HEK293 (cell line): ENCODE measurements at regions of chr6 and their contacts with region 1.

Region 1: DNA sequence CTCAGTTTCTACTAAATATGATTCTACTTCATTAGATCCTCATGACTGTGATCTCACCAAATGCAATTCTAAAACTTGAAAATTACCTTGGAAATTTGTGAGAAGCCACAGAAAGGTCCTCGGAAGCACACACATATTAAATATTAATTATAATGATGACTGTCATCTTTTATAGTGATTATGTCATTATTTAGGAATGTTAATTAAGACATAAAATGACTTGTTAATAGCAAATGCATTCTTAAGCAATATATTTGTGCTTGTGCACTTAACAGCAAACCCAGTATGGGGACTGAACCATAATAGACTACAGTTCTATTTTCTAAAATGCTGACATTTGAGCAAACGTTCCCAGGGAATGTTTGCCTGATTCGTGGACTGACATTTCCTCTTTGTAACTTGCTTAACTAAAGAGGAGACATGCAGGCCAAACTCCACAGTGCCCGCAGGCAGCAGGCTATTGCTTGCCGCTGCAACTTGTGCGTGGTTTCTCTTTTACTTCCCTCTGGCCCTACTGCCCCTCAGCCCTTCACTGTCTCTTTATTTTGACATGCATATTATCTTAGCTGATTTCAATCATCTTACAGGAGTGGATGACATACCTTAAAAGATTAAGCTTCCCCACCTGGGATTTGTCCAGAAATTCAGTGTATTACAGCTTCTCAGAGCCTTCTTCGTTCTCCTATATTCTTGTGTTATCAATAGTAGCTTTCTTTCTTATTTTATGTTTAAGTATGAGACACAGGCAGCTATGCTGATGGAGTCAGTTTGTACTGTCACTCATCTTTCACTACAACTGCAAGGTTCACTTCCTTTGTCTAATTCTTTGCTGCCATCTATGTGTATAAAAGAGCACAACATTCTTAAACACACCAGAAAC is 141.5 kb downstream of the GMDS start:
- H3K4me3 ChIP-seq: no peak overlapping the region; the same call in 1 of the 2 replicates
- H3K27ac ChIP-seq: peak overlapping the region; percentile 80
- H3K4me1 ChIP-seq: peaks cover 40% of the 10 kb centered on the region
- CTCF ChIP-seq: peak; percentile 62; the same call in 1 of the 2 replicates

Region 2: GRCh38 chr6:1601158-1602048 is 502.5 kb before region 1 on chr6:
- CTCF ChIA-PET with region 1: interaction called, 43 read pairs
- POLR2A ChIA-PET with region 1: no interaction called
- H3K4me3 ChIP-seq: no peak overlapping the region
- H3K27ac ChIP-seq: peak overlapping the region; percentile 50; the same call in 1 of the 2 replicates
- H3K4me1 ChIP-seq: peaks cover 38% of the 10 kb centered on the region
- CTCF ChIP-seq: no peak

Region 3: DNA sequence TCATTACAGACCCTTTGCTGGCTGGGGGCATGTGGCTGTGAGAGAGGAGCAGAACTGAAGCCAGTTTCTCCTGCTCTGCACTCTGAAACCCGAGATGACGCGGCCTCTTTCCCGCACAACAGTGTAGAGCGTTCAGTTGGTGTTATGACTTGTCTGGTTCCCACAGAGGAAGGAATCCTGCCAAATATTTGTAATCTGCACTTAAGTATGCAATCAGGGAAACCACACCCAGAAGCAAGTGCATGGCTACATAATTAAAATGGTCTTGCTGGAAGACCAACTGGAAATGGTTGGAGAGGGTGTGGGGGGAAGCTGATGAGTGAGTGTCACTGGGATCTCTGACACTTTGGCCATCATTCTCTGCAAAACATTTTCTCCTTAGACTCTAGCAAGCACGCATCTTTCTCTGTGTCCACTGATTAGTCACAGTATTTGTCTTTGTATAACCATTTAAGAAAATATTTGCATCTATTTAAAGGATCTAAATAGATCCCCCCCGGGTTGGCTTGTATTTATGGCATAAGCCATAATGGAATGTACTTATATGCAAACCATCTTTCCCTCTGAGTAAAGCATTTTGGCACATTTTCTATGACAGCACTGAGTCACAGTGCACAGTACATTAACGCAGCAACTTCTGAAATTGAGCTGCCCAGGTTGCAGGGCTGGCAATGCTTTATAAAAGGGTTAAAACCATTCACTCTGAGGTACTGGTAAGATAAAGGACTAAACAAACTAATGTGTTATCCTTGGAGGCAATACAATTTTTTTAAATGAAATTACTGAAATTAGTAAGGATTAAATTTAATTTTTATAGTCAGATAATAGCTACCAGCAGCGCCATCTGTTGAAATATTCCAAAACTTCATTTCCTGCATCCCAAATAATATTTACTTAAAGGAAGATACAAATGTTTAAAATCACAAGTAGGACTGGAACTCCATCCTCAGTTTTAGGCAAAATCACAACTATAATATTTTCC is 417.5 kb before region 1 on chr6:
- CTCF ChIA-PET with region 1: interaction called, 12 read pairs
- POLR2A ChIA-PET with region 1: no interaction called
- H3K4me3 ChIP-seq: no peak overlapping the region
- H3K27ac ChIP-seq: peak overlapping the region; percentile 76
- H3K4me1 ChIP-seq: peaks cover 18% of the 10 kb centered on the region
- CTCF ChIP-seq: no peak; the same call in 1 of the 2 replicates

Region 4: DNA sequence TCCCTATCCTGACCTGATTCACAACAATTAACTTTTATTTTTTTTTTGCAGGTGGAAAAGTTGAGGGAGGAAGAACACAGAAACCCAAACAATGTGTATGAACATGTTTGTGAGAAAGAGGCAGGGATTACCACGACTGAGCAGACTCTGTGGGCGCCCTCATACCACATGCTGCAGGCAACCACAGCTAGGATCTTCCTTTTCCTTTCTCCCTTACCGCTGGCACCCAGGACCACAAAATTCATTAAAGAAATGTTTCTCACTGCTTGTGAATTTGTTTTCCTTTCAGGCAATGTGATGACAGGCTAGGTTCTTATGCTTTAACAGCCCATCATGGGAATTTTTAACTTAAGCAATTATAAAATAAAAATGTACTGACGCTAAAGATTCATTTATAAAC is 145.6 kb before region 1 on chr6:
- CTCF ChIA-PET with region 1: no interaction called
- POLR2A ChIA-PET with region 1: no interaction called
- H3K4me3 ChIP-seq: no peak overlapping the region
- H3K27ac ChIP-seq: no peak overlapping the region; the same call in 1 of the 2 replicates
- H3K4me1 ChIP-seq: peaks cover 13% of the 10 kb centered on the region
- CTCF ChIP-seq: no peak

Region 5: DNA sequence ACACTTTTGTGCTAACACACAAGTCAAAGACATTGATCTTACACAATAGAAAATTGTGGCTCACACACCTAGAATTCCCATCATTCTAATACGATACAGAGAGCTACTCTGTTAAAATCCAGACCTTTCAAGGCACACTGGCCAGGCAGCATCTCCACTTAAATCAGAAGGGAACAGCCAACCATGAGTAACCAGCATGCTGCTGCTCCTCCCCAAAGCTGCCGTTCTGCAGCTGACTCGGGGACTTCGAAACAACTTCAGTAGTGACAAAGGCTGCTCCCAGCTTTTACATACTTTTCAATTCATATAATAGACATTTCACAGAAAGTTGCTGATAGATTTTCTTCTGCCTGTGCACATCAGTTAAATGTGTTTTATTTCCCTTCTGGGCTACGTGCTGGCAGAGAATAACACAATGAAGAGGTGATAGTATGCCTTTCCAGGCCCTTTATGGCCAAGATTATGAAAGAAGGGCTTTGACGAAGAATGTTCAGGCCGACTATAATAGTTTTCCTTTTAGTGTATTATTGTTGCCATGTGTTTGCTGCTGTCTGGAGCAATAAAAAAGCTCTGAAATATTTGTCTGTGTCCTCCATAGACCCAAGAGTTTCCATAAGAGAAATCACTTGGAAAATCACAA is 17.4 kb before region 1 on chr6:
- CTCF ChIA-PET with region 1: interaction called, 12 read pairs
- POLR2A ChIA-PET with region 1: no interaction called
- H3K4me3 ChIP-seq: no peak overlapping the region
- H3K27ac ChIP-seq: no peak overlapping the region
- H3K4me1 ChIP-seq: no peaks in the 10 kb centered on the region
- CTCF ChIP-seq: no peak

Region 6: GRCh38 chr6:2196079-2196679 is 92.3 kb after region 1 on chr6:
- CTCF ChIA-PET with region 1: interaction called, 13 read pairs
- POLR2A ChIA-PET with region 1: no interaction called
- H3K4me3 ChIP-seq: no peak overlapping the region
- H3K27ac ChIP-seq: no peak overlapping the region
- H3K4me1 ChIP-seq: no peaks in the 10 kb centered on the region
- CTCF ChIP-seq: no peak; the same call in 1 of the 2 replicates

Region 7: DNA sequence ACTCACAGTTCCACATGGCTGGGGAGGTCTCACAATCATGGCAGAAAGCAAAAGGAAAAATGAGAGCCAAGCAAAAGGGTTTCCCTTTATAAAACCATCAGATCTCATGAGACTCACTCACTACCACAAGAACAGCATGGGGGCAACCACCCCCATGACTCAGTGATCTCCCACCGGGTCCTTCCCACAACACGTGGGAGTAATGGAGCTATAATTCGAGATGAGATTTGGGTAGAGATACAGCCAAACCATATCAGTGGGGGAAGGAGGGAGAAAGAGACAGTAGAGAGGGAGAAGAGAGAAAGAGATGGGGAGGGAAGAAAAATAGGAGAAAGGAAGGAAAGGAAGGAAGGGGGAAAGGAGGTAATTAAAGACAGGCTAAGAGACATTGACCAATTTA is 111.5 kb after region 1 on chr6:
- CTCF ChIA-PET with region 1: no interaction called
- POLR2A ChIA-PET with region 1: no interaction called
- H3K4me3 ChIP-seq: no peak overlapping the region
- H3K27ac ChIP-seq: no peak overlapping the region
- H3K4me1 ChIP-seq: no peaks in the 10 kb centered on the region
- CTCF ChIP-seq: no peak